CD4-positive, alpha-beta memory T cell (primary cell): ENCODE measurements at regions of chr19 and their contacts with region 1.

Region 1: GRCh38 chr19:1812469-1813196 is 557 bp upstream of the ATP8B3 start:
- DNase-seq: peak; percentile 85 to 90 (median 85)
- H3K4me3 ChIP-seq: peak overlapping the region; percentile 73
- H3K4me3 Mint-ChIP-seq: peak overlapping the region; percentile 86 to 99 (median 96)
- H3K27ac ChIP-seq: peak overlapping the region; percentile 42
- H3K27ac Mint-ChIP-seq: peak overlapping the region; percentile 87 to 98 (median 95)
- H3K4me1 ChIP-seq: peaks cover 14% of the 10 kb centered on the region
- H3K4me1 Mint-ChIP-seq: peaks cover 10 to 15% (median 11%) of the 10 kb centered on the region in 4 donors
- H3K27me3 ChIP-seq: no peaks in the 10 kb centered on the region
- H3K27me3 Mint-ChIP-seq: no peaks in the 10 kb centered on the region

Region 2: GRCh38 chr19:1592755-1593500 is 219.7 kb before region 1 on chr19 and contains the start of gene MBD3:
- CTCF ChIA-PET with region 1: no interaction called
- POLR2A ChIA-PET with region 1: no interaction called
- intact Hi-C with region 1: loop called (anchors 5 kb)
- DNase-seq: peak; percentile 83 to 90 (median 88)
- H3K4me3 ChIP-seq: peak within 1 kb of the TSS; percentile 30 to 86
- H3K4me3 Mint-ChIP-seq: peak within 1 kb of the TSS; percentile 87 to 93 (median 89)
- H3K27ac ChIP-seq: peak within 1 kb of the TSS; percentile 88
- H3K27ac Mint-ChIP-seq: peak within 1 kb of the TSS; percentile 90 to 96 (median 92)
- H3K4me1 ChIP-seq: peaks cover 24% of the 10 kb centered on the region
- H3K4me1 Mint-ChIP-seq: peaks cover 9 to 26% (median 15%) of the 10 kb centered on the region in 4 donors
- H3K27me3 ChIP-seq: no peaks in the 10 kb centered on the region
- H3K27me3 Mint-ChIP-seq: no peaks in the 10 kb centered on the region
- total RNA-seq, gene MBD3: 56.9 to 62.8 TPM

Region 3: GRCh38 chr19:1652471-1653299 is 159.9 kb before region 1 on chr19 and contains the start of gene TCF3:
- CTCF ChIA-PET with region 1: no interaction called
- POLR2A ChIA-PET with region 1: interaction called, 5 read pairs
- intact Hi-C with region 1: loop called (anchors 2 kb)
- DNase-seq: peak; percentile 98 to 100 (median 100)
- H3K4me3 ChIP-seq: peak within 1 kb of the TSS; percentile 36 to 84
- H3K4me3 Mint-ChIP-seq: peak within 1 kb of the TSS; percentile 84 to 95 (median 89)
- H3K27ac ChIP-seq: peak within 1 kb of the TSS; percentile 99
- H3K27ac Mint-ChIP-seq: peak within 1 kb of the TSS; percentile 94 to 99 (median 96)
- H3K4me1 ChIP-seq: peaks cover 17% of the 10 kb centered on the region
- H3K4me1 Mint-ChIP-seq: peaks cover 5 to 22% (median 13%) of the 10 kb centered on the region in 4 donors
- H3K27me3 ChIP-seq: no peaks in the 10 kb centered on the region
- H3K27me3 Mint-ChIP-seq: peaks cover 1 to 6% of the 10 kb centered on the region in 2 donors
- total RNA-seq, gene TCF3: 72.0 to 75.7 TPM

Region 4: GRCh38 chr19:1789261-1790041 is 23.2 kb before region 1 on chr19:
- CTCF ChIA-PET with region 1: no interaction called
- POLR2A ChIA-PET with region 1: interaction called, 3 read pairs
- intact Hi-C with region 1: loop called (anchors 2 kb)
- DNase-seq: peak in 1 of 5 donors; percentile 17
- H3K4me3 ChIP-seq: no peak overlapping the region
- H3K4me3 Mint-ChIP-seq: no peak overlapping the region
- H3K27ac ChIP-seq: no peak overlapping the region
- H3K27ac Mint-ChIP-seq: no peak overlapping the region
- H3K4me1 ChIP-seq: no peaks in the 10 kb centered on the region
- H3K4me1 Mint-ChIP-seq: peaks cover 0 to 2% (median 0%) of the 10 kb centered on the region in 4 donors
- H3K27me3 ChIP-seq: no peaks in the 10 kb centered on the region
- H3K27me3 Mint-ChIP-seq: peaks cover 6 to 7% of the 10 kb centered on the region in 2 donors

Region 5: GRCh38 chr19:1848399-1849131 is 35.9 kb after region 1 on chr19 and contains the start of gene REXO1:
- CTCF ChIA-PET with region 1: no interaction called
- POLR2A ChIA-PET with region 1: no interaction called
- intact Hi-C with region 1: loop called (anchors 1 kb)
- DNase-seq: peak; percentile 97 to 100 (median 98)
- H3K4me3 ChIP-seq: peak within 1 kb of the TSS; percentile 73 to 92
- H3K4me3 Mint-ChIP-seq: peak within 1 kb of the TSS; percentile 87 to 93 (median 90)
- H3K27ac ChIP-seq: peak within 1 kb of the TSS; percentile 93
- H3K27ac Mint-ChIP-seq: peak within 1 kb of the TSS; percentile 91 to 94 (median 94)
- H3K4me1 ChIP-seq: peaks cover 75% of the 10 kb centered on the region
- H3K4me1 Mint-ChIP-seq: peaks cover 31 to 75% (median 50%) of the 10 kb centered on the region in 4 donors
- H3K27me3 ChIP-seq: no peaks in the 10 kb centered on the region
- H3K27me3 Mint-ChIP-seq: no peaks in the 10 kb centered on the region
- total RNA-seq, gene REXO1: 57.1 to 57.3 TPM